CD8-positive, alpha-beta T cell (primary cell): ENCODE measurements at regions of chr11 and their contacts with region 1.

Region 1: DNA sequence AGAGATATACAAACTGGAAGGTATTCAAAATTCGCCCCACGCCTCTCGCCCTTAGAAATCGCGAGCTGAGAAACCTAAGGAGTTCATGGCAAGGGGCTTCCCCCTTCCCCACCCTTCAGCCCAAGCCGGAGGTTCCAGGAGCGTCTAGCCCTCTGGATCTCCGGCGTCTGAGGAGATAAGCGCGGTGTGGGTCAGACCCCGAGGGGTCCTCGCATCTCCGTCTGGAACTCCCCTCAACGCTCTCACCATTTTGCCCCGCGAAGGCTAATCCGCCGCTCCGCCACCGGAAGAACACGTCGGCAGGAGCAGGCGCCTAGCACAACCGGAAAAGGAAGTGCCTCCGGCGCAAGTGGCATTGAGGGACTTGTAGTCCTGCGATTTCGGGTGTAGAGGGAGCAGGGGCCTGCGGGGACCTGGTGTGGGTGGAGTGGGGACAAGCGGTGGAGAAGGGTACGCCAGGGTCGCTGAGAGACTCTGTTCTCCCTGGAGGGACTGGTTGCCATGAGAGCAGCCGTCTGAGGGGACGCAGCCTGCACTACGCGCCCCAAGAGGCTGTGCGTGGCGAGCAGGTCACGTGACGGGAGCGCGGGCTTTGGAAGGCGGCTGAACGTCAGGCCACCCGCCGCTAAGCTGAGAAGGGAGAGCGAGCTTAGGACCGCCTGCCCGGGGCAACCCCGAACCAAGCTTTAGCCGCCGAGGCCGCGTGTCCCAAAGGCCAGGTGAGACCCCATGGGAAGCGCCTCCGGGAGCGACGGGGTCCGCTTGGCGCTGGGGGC is at the starts of genes FEN1 and TMEM258:
- DNase-seq: peak; percentile 71 to 94 (median 88)
- ATAC-seq: peak; percentile 87
- H3K4me3 ChIP-seq: peak within 1 kb of the TSS; percentile 64 to 92
- H3K4me3 Mint-ChIP-seq: peak within 1 kb of the TSS; percentile 93
- H3K27ac ChIP-seq: peak within 1 kb of the TSS; percentile 88 to 96
- H3K27ac Mint-ChIP-seq: peak within 1 kb of the TSS; percentile 97
- H3K4me1 ChIP-seq: peaks cover 15% of the 10 kb centered on the region
- H3K4me1 Mint-ChIP-seq: peaks cover 37% of the 10 kb centered on the region
- H3K27me3 ChIP-seq: no peaks in the 10 kb centered on the region
- H3K27me3 Mint-ChIP-seq: no peaks in the 10 kb centered on the region
- CTCF ChIP-seq: no peak
- total RNA-seq, gene FEN1: 12.9 to 15.2 TPM
- total RNA-seq, gene TMEM258: 48.1 to 53.9 TPM

Region 2: GRCh38 chr11:61446211-61446651 is 346.3 kb before region 1 on chr11:
- CTCF ChIA-PET with region 1: no interaction called
- POLR2A ChIA-PET with region 1: no interaction called
- intact Hi-C with region 1: no loop called
- DNase-seq: peak; percentile 35 to 74 (median 62)
- ATAC-seq: peak; percentile 93
- H3K4me3 ChIP-seq: no peak overlapping the region
- H3K4me3 Mint-ChIP-seq: no peak overlapping the region
- H3K27ac ChIP-seq: no peak overlapping the region
- H3K27ac Mint-ChIP-seq: no peak overlapping the region
- H3K4me1 ChIP-seq: no peaks in the 10 kb centered on the region
- H3K4me1 Mint-ChIP-seq: peaks cover 17% of the 10 kb centered on the region
- H3K27me3 ChIP-seq: no peaks in the 10 kb centered on the region
- H3K27me3 Mint-ChIP-seq: no peaks in the 10 kb centered on the region
- CTCF ChIP-seq: peak; percentile 45

Region 3: DNA sequence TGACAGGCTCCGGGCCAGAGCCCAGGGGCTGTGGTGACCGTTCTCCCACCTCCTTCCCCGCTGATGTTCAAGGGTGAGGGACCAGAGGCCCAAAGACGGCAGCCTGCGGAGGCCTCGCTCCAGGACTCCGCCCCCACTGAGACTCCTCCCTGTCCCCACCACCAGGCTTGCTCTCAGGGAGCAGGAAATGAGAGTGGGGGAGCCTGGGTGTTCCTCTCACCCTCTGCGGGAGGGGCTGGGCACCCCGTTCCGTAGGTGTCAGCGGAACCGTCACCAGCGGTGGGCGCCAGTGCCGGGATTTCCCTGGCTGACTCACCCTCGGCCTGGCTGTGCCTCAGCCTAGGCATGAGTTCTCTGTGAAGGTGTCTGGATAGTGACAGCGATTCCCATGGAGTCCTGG is 96.6 kb before region 1 on chr11:
- CTCF ChIA-PET with region 1: no interaction called
- POLR2A ChIA-PET with region 1: no interaction called
- intact Hi-C with region 1: loop called in 1 of 2 experiments (anchors 5 kb)
- DNase-seq: peak; percentile 80 to 97 (median 90)
- ATAC-seq: peak; percentile 99
- H3K4me3 ChIP-seq: peak overlapping the region; percentile 21 to 52
- H3K4me3 Mint-ChIP-seq: peak overlapping the region; percentile 55
- H3K27ac ChIP-seq: peak overlapping the region in 1 of 2 experiments; percentile 14
- H3K27ac Mint-ChIP-seq: peak overlapping the region; percentile 79
- H3K4me1 ChIP-seq: peaks cover 36% of the 10 kb centered on the region
- H3K4me1 Mint-ChIP-seq: peaks cover 25% of the 10 kb centered on the region
- H3K27me3 ChIP-seq: no peaks in the 10 kb centered on the region
- H3K27me3 Mint-ChIP-seq: no peaks in the 10 kb centered on the region
- CTCF ChIP-seq: no peak

Region 4: GRCh38 chr11:61827571-61828378 is 35.3 kb after region 1 on chr11 and contains the start of gene FADS2:
- CTCF ChIA-PET with region 1: interaction called, 13 read pairs
- POLR2A ChIA-PET with region 1: no interaction called
- intact Hi-C with region 1: no loop called
- DNase-seq: peak in 8 of 9 experiments; percentile 33 to 83 (median 66)
- ATAC-seq: peak; percentile 82
- H3K4me3 ChIP-seq: peak within 1 kb of the TSS; percentile 59 to 86
- H3K4me3 Mint-ChIP-seq: peak within 1 kb of the TSS; percentile 83
- H3K27ac ChIP-seq: peak within 1 kb of the TSS in 1 of 2 experiments; percentile 42
- H3K27ac Mint-ChIP-seq: no peak within 1 kb of the TSS
- H3K4me1 ChIP-seq: peaks cover 26% of the 10 kb centered on the region
- H3K4me1 Mint-ChIP-seq: peaks cover 19% of the 10 kb centered on the region
- H3K27me3 ChIP-seq: peaks cover 0 to 5% of the 10 kb centered on the region in 2 experiments
- H3K27me3 Mint-ChIP-seq: peaks cover 10% of the 10 kb centered on the region
- CTCF ChIP-seq: no peak
- total RNA-seq, gene FADS2: 0.31 to 0.52 TPM

Region 5: DNA sequence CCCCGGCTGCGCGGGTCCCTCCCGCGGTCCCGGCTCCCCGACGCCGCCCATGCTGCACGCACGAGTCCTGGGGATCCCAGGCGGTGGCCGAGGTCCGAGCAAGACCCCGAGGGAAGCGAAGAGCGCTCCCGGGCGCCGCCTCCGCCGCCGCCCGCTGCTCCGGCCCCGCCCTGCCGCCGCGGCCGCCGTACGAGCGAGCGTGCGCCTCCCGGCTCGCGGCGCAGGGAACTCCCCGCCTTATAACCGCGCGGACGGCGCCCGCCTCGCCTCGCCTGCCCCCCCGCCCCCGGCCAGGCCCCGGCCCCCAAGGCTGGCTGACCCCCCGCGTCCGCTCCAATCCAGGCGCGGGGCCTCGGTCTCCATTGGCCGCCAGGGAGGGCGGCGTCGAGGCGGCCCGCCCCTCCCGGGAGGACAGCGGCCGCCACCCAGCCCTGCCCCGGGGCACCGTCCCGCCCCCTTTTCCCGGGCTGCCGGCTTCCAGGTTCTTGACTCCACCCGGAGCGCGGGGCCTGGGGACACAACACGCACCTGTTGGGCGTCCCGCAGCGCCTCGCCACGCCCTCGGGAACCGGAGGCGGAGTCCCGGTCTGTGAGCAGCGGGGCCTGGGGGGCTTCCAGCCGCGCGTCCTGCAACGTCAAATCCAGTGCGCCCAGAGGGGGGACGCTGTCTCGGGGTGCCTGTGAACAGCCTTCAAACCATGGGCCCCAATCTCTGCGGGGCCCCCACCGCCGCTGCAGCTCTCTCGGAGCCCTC is 99.0 kb after region 1 on chr11 and contains the start of gene FADS3:
- CTCF ChIA-PET with region 1: interaction called, 69 read pairs
- POLR2A ChIA-PET with region 1: interaction called, 8 read pairs
- intact Hi-C with region 1: loop called (anchors 1 kb)
- DNase-seq: peak; percentile 23 to 89 (median 65)
- ATAC-seq: peak; percentile 61
- H3K4me3 ChIP-seq: peak within 1 kb of the TSS; percentile 67 to 70
- H3K4me3 Mint-ChIP-seq: peak within 1 kb of the TSS; percentile 81
- H3K27ac ChIP-seq: peak within 1 kb of the TSS in 1 of 2 experiments; percentile 54
- H3K27ac Mint-ChIP-seq: no peak within 1 kb of the TSS
- H3K4me1 ChIP-seq: peaks cover 11% of the 10 kb centered on the region
- H3K4me1 Mint-ChIP-seq: peaks cover 4% of the 10 kb centered on the region
- H3K27me3 ChIP-seq: no peaks in the 10 kb centered on the region
- H3K27me3 Mint-ChIP-seq: peaks cover 1% of the 10 kb centered on the region
- CTCF ChIP-seq: no peak
- total RNA-seq, gene FADS3: 11.5 to 14.9 TPM

Region 6: DNA sequence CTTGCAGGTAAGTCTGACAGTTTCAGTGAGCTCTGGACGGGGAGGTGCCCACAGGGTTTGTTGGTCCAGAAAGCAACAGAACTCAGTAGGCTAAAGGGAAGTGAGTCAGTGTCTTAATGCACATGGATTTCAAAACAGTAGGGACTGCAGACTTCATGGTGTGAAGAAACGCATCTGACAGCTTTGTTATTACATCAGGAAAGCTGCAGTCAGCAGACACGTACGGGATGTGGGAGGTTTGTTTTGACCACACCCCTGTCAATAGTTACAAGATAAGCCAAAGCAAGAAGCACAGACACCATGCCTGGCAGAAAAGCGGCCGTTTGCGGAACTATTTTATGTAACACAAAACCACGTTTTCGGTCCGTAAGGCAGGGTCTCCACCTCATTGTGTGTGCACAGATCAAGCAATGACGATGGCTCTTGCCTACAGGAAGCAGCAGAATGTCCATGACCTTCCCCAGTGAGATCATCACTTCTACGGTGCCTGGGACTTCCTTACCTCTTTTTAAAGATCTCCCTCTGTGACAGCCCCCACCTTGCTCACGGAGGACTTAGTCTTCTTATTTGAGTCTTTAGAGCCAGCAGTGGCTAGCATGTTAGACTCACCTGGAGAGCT is 233.1 kb after region 1 on chr11:
- CTCF ChIA-PET with region 1: interaction called, 3 read pairs
- POLR2A ChIA-PET with region 1: no interaction called
- intact Hi-C with region 1: loop called in 1 of 2 experiments (anchors 1 kb)
- DNase-seq: peak; percentile 41 to 97 (median 77)
- ATAC-seq: peak; percentile 87
- H3K4me3 ChIP-seq: peak overlapping the region in 1 of 2 experiments; percentile 24
- H3K4me3 Mint-ChIP-seq: peak overlapping the region; percentile 44
- H3K27ac ChIP-seq: peak overlapping the region; percentile 78 to 91
- H3K27ac Mint-ChIP-seq: peak overlapping the region; percentile 95
- H3K4me1 ChIP-seq: peaks cover 15% of the 10 kb centered on the region
- H3K4me1 Mint-ChIP-seq: peaks cover 20% of the 10 kb centered on the region
- H3K27me3 ChIP-seq: no peaks in the 10 kb centered on the region
- H3K27me3 Mint-ChIP-seq: no peaks in the 10 kb centered on the region
- CTCF ChIP-seq: no peak

Region 7: DNA sequence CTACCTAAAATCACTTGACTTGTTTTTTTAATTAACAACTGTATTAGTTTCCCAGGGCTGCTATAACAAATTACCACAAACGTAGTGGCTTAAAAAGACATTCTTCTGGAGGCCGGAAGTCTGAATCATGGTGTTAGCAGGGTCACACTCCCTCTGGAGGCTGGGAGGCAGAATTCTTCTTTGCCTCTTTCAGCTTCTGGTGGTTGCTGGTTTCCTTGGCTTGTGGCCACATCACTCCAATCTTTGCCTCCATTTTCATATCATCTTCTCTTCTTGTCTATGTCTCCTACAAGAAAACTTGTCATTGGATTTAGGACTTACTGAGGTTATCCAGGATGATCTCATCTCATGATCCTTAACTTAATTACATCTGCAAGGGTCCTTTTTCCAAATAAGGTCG is 324.0 kb after region 1 on chr11:
- CTCF ChIA-PET with region 1: interaction called, 10 read pairs
- POLR2A ChIA-PET with region 1: no interaction called
- intact Hi-C with region 1: no loop called
- DNase-seq: no peak
- ATAC-seq: no peak
- H3K4me3 ChIP-seq: no peak overlapping the region
- H3K4me3 Mint-ChIP-seq: no peak overlapping the region
- H3K27ac ChIP-seq: no peak overlapping the region
- H3K27ac Mint-ChIP-seq: no peak overlapping the region
- H3K4me1 ChIP-seq: peaks cover 6% of the 10 kb centered on the region
- H3K4me1 Mint-ChIP-seq: peaks cover 2% of the 10 kb centered on the region
- H3K27me3 ChIP-seq: no peaks in the 10 kb centered on the region
- H3K27me3 Mint-ChIP-seq: no peaks in the 10 kb centered on the region
- CTCF ChIP-seq: no peak

Region 8: GRCh38 chr11:62880803-62881578 is 1088.5 kb after region 1 on chr11 and contains the start of gene SLC3A2:
- CTCF ChIA-PET with region 1: no interaction called
- POLR2A ChIA-PET with region 1: no interaction called
- intact Hi-C with region 1: loop called in 1 of 2 experiments (anchors 5 kb)
- DNase-seq: peak; percentile 76 to 94 (median 85)
- ATAC-seq: peak; percentile 74
- H3K4me3 ChIP-seq: peak within 1 kb of the TSS; percentile 66 to 97
- H3K4me3 Mint-ChIP-seq: peak within 1 kb of the TSS; percentile 100
- H3K27ac ChIP-seq: peak within 1 kb of the TSS; percentile 94 to 99
- H3K27ac Mint-ChIP-seq: peak within 1 kb of the TSS; percentile 100
- H3K4me1 ChIP-seq: peaks cover 36% of the 10 kb centered on the region
- H3K4me1 Mint-ChIP-seq: peaks cover 50% of the 10 kb centered on the region
- H3K27me3 ChIP-seq: no peaks in the 10 kb centered on the region
- H3K27me3 Mint-ChIP-seq: no peaks in the 10 kb centered on the region
- CTCF ChIP-seq: peak; percentile 84
- total RNA-seq, gene SLC3A2: 212 to 245 TPM